Activated CD4-positive, alpha-beta T cell treated with anti-CD3 and anti-CD28 coated beads, Interleukin-2, amount 10 ng/mL, durations not matched to agents 24 days and 14 days (primary cell): ENCODE measurements at regions of chr19 and their contacts with region 1.

Region 1: DNA sequence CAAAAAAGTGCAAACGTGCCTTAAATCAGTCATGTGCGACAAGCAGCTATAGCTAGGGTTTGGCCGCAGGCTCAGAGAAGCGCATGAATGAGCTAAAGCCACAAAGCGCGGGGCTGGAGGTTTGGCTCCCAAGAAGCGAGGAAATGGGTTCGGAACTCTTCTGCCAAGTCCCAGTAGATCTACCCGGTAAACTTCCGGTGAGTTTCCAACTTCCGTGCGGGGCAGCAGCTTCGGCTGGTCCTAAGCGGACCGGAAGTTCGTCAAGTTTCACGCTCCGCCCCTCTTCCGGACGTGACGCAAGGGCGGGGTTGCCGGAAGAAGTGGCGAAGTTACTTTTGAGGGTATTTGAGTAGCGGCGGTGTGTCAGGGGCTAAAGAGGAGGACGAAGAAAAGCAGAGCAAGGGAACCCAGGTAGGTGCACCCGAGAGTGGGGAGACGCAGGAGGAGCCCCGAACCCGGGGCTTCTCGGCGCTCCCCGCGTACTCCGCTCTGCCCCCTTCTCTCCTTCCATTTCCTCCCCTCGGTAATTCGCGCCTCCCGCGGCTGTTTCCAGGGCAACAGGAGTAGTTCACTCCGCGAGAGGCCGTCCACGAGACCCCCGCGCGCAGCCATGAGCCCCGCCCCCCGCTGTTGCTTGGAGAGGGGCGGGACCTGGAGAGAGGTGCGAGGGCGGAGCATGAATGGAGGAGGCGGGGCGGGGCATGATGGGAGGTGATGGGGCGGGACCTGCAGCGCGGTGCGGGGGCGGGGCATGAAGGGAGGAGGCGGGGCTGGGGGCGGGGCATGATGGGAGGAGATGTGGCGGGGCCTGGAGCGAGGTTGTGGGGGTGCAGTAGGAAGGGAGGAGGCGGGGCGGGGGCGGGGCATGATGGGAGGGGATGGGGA is at the start of gene NR1H2:
- DNase-seq: peak; percentile 99
- H3K4me3 Mint-ChIP-seq: peak within 1 kb of the TSS; percentile 97
- H3K27ac Mint-ChIP-seq: peak within 1 kb of the TSS; percentile 99
- H3K4me1 Mint-ChIP-seq: peaks cover 16% of the 10 kb centered on the region
- H3K27me3 Mint-ChIP-seq: no peaks in the 10 kb centered on the region
- total RNA-seq, gene NR1H2: 81.4 and 84.7 TPM in 2 replicates

Region 2: GRCh38 chr19:50476224-50476942 is 100.0 kb after region 1 on chr19 and contains the starts of genes EMC10 and GARIN5A:
- intact Hi-C with region 1: loop called (anchors 1 kb)
- DNase-seq: peak; percentile 98
- H3K4me3 Mint-ChIP-seq: peak within 1 kb of the TSS; percentile 100
- H3K27ac Mint-ChIP-seq: peak within 1 kb of the TSS; percentile 93
- H3K4me1 Mint-ChIP-seq: peaks cover 21% of the 10 kb centered on the region
- H3K27me3 Mint-ChIP-seq: no peaks in the 10 kb centered on the region
- total RNA-seq, gene EMC10: 79.2 and 81.6 TPM in 2 replicates
- total RNA-seq, gene GARIN5A: 0.21 and 0.68 TPM in 2 replicates

Region 3: DNA sequence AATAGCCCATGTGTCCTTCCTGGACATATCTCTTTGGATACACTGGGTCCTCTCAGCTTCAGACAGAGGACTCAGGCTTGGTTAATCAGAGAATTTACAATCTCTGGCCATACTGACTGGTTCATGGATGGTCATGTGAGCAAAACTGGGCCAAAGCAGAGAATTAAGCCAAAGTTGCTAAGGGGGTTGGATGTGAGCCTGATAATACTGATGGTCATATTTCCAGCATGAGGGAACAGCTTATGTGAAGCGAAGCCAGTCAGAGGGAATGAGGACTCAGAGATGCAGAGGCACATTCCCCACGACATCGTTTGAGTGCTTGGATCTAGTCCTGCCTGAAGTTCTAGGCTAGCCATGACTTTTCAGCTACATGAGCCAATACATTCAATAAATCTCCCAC is 213.8 kb after region 1 on chr19:
- intact Hi-C with region 1: no loop called
- DNase-seq: no peak
- H3K4me3 Mint-ChIP-seq: no peak overlapping the region
- H3K27ac Mint-ChIP-seq: no peak overlapping the region
- H3K4me1 Mint-ChIP-seq: no peaks in the 10 kb centered on the region
- H3K27me3 Mint-ChIP-seq: peaks cover 4% of the 10 kb centered on the region